Dendritic cell treated with granulocyte-macrophage colony-stimulating factor and Interleukin-4, amounts not matched to agents 40 ng/mL and 50 ng/mL, for 4 days (primary cell): ENCODE measurements at regions of chrX and their contacts with region 1.

Region 1: GRCh38 chrX:18984381-18985185 is 669 bp upstream of the PHKA2 start:
- H3K4me3 Mint-ChIP-seq: peak overlapping the region; percentile 78
- H3K27ac Mint-ChIP-seq: peak overlapping the region; percentile 92
- H3K4me1 Mint-ChIP-seq: peaks cover 6% of the 10 kb centered on the region
- H3K27me3 Mint-ChIP-seq: no peaks in the 10 kb centered on the region

Region 2: DNA sequence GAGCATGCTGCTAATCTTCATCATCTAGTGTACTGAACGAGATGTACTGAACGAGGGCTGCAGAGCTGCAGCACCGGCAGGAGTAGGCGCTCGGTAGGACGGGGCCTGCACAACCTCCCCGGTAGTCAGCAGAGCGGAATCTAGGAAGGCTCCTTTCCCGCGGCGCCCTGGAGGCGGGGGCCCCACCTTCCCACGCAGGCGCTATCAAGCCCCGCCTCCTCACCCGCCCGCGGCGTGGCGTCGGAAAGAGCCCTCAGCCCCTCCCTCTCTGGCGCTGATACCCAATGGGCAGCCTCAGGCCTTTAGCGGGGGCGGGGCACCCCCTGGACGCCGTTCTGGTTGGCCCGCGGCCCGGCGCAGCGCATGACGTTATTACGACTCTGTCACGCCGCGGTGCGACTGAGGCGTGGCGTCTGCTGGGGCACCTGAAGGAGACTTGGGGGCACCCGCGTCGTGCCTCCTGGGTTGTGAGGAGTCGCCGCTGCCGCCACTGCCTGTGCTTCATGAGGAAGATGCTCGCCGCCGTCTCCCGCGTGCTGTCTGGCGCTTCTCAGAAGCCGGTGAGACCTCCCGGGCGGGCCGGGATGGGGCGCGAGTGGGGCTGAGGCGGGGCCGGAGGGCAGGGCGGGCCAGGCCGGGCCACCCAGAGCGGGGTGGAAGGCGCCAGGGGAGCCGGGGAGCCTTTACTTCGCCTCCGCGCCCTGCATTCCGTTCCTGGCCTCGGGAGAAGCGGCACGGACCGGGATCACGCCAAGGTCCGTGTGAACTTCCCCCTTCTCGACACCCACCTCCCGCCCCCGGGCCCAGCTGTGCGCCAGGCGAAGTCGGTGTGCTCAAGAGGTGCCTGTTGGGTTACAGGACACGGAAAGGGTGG is 359.2 kb after region 1 on chrX and contains the start of gene PDHA1:
- intact Hi-C with region 1: loop called (anchors 5 kb)
- H3K4me3 Mint-ChIP-seq: peak within 1 kb of the TSS; percentile 79
- H3K27ac Mint-ChIP-seq: peak within 1 kb of the TSS; percentile 86
- H3K4me1 Mint-ChIP-seq: peaks cover 21% of the 10 kb centered on the region
- H3K27me3 Mint-ChIP-seq: no peaks in the 10 kb centered on the region